ENCODE measurements at regions of chr21 and their contacts with region 1.

Region 1: GRCh38 chr21:15483138-15483780 is 246.5 kb upstream of the USP25 start:
- DNase-seq: peak; percentile 83
- ATAC-seq: peak; percentile 99
- H3K4me3 ChIP-seq: no peak overlapping the region
- H3K4me3 Mint-ChIP-seq: no peak overlapping the region
- H3K27ac ChIP-seq: no peak overlapping the region
- H3K27ac Mint-ChIP-seq: no peak overlapping the region
- H3K4me1 ChIP-seq: peaks cover 0 to 3% of the 10 kb centered on the region in 2 donors
- H3K4me1 Mint-ChIP-seq: peaks cover 2% of the 10 kb centered on the region
- H3K27me3 ChIP-seq: no peaks in the 10 kb centered on the region
- H3K27me3 Mint-ChIP-seq: peaks cover 4% of the 10 kb centered on the region
- CTCF ChIP-seq: peak; percentile 93

Region 2: DNA sequence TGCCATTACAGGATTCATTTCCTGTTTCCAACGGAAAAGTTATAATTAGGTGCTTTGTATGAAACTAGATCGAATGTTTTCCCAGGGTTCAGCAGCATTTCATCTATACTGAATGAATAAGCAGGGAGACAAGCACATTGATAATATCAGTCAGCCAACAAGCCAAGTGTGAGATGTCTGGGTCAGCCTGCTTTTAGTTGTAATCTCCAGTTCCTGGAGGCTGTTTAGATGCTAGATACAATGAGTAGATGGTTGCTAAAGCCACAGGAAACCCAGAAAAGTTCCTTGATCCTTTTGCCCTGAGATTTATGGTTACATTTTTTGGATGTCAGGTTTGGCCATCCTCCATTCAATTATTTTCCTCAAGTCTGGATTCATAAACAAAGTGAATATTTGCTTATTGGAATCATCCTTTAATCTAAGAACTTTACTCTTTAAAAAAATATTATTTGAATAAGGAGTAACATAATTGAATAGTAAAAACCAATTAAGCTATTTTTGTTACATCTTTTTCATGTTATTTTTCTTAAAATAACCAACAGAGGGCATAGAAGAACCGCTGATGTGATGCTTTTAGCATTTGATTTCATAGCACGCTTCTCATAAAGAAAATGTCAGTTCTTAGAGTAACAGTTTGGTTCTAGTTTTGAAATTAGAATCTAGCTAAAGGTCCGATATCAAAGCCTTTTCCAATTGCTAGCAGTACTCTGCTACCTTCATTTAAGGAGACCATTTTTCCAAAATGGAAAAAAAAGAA is 1176.9 kb before region 1 on chr21:
- CTCF ChIA-PET with region 1: interaction called, 8 read pairs
- POLR2A ChIA-PET with region 1: no interaction called
- intact Hi-C with region 1: loop called (anchors 5 kb)
- DNase-seq: peak; percentile 3
- ATAC-seq: no peak
- H3K4me3 ChIP-seq: no peak overlapping the region
- H3K4me3 Mint-ChIP-seq: no peak overlapping the region
- H3K27ac ChIP-seq: no peak overlapping the region
- H3K27ac Mint-ChIP-seq: no peak overlapping the region
- H3K4me1 ChIP-seq: no peaks in the 10 kb centered on the region
- H3K4me1 Mint-ChIP-seq: no peaks in the 10 kb centered on the region
- H3K27me3 ChIP-seq: no peaks in the 10 kb centered on the region
- H3K27me3 Mint-ChIP-seq: peaks cover 10% of the 10 kb centered on the region
- CTCF ChIP-seq: peak; percentile 45

Region 3: DNA sequence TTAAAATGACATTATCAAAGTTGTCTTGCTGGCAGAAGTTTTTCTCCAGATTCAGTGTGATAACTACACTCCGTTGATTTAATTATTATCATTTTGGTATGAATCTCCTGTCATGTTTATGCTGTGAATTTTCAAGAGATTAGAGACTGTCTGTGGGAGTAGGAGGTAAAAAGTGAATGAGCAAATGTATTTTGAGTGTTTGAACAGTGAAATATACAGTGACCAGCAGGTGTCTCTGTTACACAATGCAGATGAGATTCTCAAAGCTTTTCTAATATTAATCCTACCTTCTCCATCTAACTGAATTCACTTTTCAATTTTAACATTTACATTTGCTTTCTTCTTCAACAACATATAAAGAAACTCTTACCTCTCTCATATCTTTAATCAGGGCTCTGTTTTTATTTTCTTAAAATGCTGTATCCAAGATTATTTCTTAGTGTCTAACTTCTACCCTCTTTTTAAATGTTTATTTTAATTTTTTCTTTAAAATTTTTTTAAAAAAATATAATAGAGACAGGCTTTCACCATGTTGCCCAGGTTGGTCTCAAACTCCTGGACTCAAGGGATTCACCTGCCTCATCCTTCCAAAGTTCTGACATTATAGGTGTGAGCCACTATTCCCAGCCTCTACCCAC is 1079.5 kb before region 1 on chr21:
- CTCF ChIA-PET with region 1: interaction called, 16 read pairs
- POLR2A ChIA-PET with region 1: no interaction called
- intact Hi-C with region 1: loop called (anchors 1 kb)
- DNase-seq: peak; percentile 64
- ATAC-seq: peak; percentile 51
- H3K4me3 ChIP-seq: no peak overlapping the region
- H3K4me3 Mint-ChIP-seq: no peak overlapping the region
- H3K27ac ChIP-seq: no peak overlapping the region
- H3K27ac Mint-ChIP-seq: no peak overlapping the region
- H3K4me1 ChIP-seq: no peaks in the 10 kb centered on the region
- H3K4me1 Mint-ChIP-seq: peaks cover 1% of the 10 kb centered on the region
- H3K27me3 ChIP-seq: no peaks in the 10 kb centered on the region
- H3K27me3 Mint-ChIP-seq: no peaks in the 10 kb centered on the region
- CTCF ChIP-seq: peak; percentile 78

Region 4: GRCh38 chr21:14864211-14865021 is 618.8 kb before region 1 on chr21:
- CTCF ChIA-PET with region 1: interaction called, 20 read pairs
- POLR2A ChIA-PET with region 1: no interaction called
- intact Hi-C with region 1: loop called (anchors 1 kb)
- DNase-seq: peak; percentile 41
- ATAC-seq: peak; percentile 72
- H3K4me3 ChIP-seq: no peak overlapping the region
- H3K4me3 Mint-ChIP-seq: no peak overlapping the region
- H3K27ac ChIP-seq: no peak overlapping the region
- H3K27ac Mint-ChIP-seq: no peak overlapping the region
- H3K4me1 ChIP-seq: peaks cover 13 to 17% of the 10 kb centered on the region in 2 donors
- H3K4me1 Mint-ChIP-seq: peaks cover 42% of the 10 kb centered on the region
- H3K27me3 ChIP-seq: no peaks in the 10 kb centered on the region
- H3K27me3 Mint-ChIP-seq: no peaks in the 10 kb centered on the region
- CTCF ChIP-seq: peak; percentile 47

Region 5: DNA sequence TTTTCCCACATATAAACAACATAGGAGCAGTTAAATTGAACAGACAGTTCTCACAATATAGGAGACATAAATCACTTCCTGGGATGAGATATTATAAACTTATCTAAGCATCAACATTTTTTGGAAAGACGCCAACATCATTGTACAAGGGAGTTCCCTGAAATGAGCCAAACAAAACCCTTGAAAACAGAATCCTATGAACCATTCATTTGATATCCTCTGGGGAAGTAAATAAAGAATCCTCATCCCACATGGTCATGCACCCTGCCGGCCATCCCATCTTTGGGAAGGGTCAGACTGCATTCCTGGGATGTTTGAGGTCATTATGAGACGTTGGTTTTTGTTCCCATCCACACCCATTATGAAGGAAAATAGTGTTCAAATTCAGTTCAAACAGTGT is 134.7 kb after region 1 on chr21:
- CTCF ChIA-PET with region 1: no interaction called
- POLR2A ChIA-PET with region 1: no interaction called
- intact Hi-C with region 1: no loop called
- DNase-seq: no peak
- ATAC-seq: no peak
- H3K4me3 ChIP-seq: no peak overlapping the region
- H3K4me3 Mint-ChIP-seq: no peak overlapping the region
- H3K27ac ChIP-seq: no peak overlapping the region
- H3K27ac Mint-ChIP-seq: no peak overlapping the region
- H3K4me1 ChIP-seq: no peaks in the 10 kb centered on the region
- H3K4me1 Mint-ChIP-seq: no peaks in the 10 kb centered on the region
- H3K27me3 ChIP-seq: no peaks in the 10 kb centered on the region
- H3K27me3 Mint-ChIP-seq: peaks cover 2% of the 10 kb centered on the region
- CTCF ChIP-seq: no peak